ENCODE measurements at regions of chr12 and their contacts with region 1.

Region 1: GRCh38 chr12:56117778-56118687 is at the start of gene ZC3H10:
- DNase-seq: peak; percentile 99
- ATAC-seq: peak; percentile 77
- H3K4me3 Mint-ChIP-seq: peak within 1 kb of the TSS; percentile 97
- H3K27ac Mint-ChIP-seq: peak within 1 kb of the TSS; percentile 100
- H3K4me1 Mint-ChIP-seq: peaks cover 24% of the 10 kb centered on the region
- H3K27me3 Mint-ChIP-seq: no peaks in the 10 kb centered on the region
- total RNA-seq, gene ZC3H10: 6.4 to 6.5 TPM

Region 2: GRCh38 chr12:55829967-55830600 is 287.9 kb before region 1 on chr12:
- CTCF ChIA-PET with region 1: no interaction called
- POLR2A ChIA-PET with region 1: no interaction called
- intact Hi-C with region 1: loop called in 1 of 2 experiments (anchors 1 kb)
- DNase-seq: peak; percentile 52
- ATAC-seq: peak; percentile 37
- H3K4me3 Mint-ChIP-seq: peak overlapping the region; percentile 99
- H3K27ac Mint-ChIP-seq: peak overlapping the region; percentile 97
- H3K4me1 Mint-ChIP-seq: peaks cover 46% of the 10 kb centered on the region
- H3K27me3 Mint-ChIP-seq: no peaks in the 10 kb centered on the region

Region 3: DNA sequence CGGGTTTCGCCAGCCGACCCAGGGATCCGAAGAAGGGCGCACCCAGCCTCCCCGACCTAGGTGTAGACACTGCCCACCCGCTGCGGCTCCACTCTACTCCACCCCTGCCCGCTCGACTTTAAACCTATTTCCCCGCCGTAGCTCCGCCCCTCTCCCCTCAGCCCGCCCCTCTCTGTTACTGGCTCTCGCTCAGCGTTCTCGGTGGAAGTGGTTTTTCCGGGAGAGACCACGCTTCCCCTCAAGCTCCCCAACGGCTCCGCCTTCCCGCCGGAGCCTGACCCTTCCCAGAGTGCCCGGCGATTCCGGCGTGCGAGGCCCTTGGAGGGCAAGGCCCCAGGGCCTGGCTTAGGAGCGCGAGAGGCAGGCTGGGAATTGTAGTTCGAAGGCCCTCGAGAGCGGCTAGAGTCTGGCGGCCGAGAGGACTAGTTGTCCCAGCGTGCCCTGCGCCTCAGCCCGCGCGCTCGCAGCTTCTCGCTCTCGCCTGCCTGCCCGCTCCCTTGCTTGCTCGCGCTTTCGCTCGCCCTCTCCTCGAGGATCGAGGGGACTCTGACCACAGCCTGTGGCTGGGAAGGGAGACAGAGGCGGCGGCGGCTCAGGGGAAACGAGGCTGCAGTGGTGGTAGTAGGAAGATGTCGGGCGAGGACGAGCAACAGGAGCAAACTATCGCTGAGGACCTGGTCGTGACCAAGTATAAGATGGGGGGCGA is 13.8 kb before region 1 on chr12 and contains the start of gene PA2G4:
- CTCF ChIA-PET with region 1: interaction called, 47 read pairs
- POLR2A ChIA-PET with region 1: interaction called, 76 read pairs
- intact Hi-C with region 1: loop called (anchors 1 kb)
- DNase-seq: peak; percentile 99
- ATAC-seq: peak; percentile 95
- H3K4me3 Mint-ChIP-seq: peak within 1 kb of the TSS; percentile 100
- H3K27ac Mint-ChIP-seq: peak within 1 kb of the TSS; percentile 100
- H3K4me1 Mint-ChIP-seq: peaks cover 43% of the 10 kb centered on the region
- H3K27me3 Mint-ChIP-seq: no peaks in the 10 kb centered on the region
- total RNA-seq, gene PA2G4: 446 to 695 TPM

Region 4: DNA sequence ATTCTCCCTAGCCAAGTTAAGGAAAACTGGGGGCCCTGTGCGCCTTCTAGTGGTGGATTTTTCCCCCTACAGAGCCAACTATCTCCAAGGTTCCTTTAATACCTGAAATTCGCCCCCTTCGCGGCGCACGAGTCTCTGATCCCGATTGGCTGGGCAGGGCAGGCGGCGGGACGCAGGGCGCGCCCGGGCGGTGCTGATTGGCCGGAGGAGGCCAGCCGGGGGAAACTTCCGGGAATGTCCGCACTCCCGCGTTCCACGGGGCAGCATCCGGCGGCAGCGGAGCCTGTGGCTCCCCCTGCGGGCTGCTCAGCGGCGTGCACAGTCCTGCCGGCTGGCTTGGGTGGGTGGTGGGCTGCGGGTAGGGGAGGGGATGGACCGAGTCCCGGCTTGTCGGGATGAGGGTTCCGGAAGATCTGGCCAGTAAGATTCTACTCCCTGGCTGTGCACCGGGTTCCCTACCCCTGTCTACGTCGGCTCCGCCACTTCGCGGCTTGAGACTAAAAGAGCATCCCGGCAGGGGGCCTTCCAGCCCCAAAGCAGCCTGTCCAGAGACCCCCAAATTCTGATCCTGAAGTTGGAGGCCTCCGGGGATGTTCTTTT is 106.2 kb after region 1 on chr12 and contains the start of gene NABP2:
- CTCF ChIA-PET with region 1: interaction called, 41 read pairs
- POLR2A ChIA-PET with region 1: interaction called, 14 read pairs
- intact Hi-C with region 1: loop called (anchors 1 kb)
- DNase-seq: peak; percentile 98
- ATAC-seq: peak; percentile 83
- H3K4me3 Mint-ChIP-seq: peak within 1 kb of the TSS; percentile 98
- H3K27ac Mint-ChIP-seq: peak within 1 kb of the TSS; percentile 88
- H3K4me1 Mint-ChIP-seq: peaks cover 37% of the 10 kb centered on the region
- H3K27me3 Mint-ChIP-seq: no peaks in the 10 kb centered on the region
- total RNA-seq, gene NABP2: 69.1 to 76.0 TPM

Region 5: GRCh38 chr12:56333679-56334489 is 215.9 kb after region 1 on chr12 and contains the start of gene PAN2:
- CTCF ChIA-PET with region 1: interaction called, 4 read pairs
- POLR2A ChIA-PET with region 1: no interaction called
- intact Hi-C with region 1: loop called in 1 of 2 experiments (anchors 1 kb)
- DNase-seq: peak; percentile 96
- ATAC-seq: peak; percentile 88
- H3K4me3 Mint-ChIP-seq: peak within 1 kb of the TSS; percentile 83
- H3K27ac Mint-ChIP-seq: peak within 1 kb of the TSS; percentile 99
- H3K4me1 Mint-ChIP-seq: peaks cover 37% of the 10 kb centered on the region
- H3K27me3 Mint-ChIP-seq: no peaks in the 10 kb centered on the region
- total RNA-seq, gene PAN2: 54.6 to 62.5 TPM

Region 6: DNA sequence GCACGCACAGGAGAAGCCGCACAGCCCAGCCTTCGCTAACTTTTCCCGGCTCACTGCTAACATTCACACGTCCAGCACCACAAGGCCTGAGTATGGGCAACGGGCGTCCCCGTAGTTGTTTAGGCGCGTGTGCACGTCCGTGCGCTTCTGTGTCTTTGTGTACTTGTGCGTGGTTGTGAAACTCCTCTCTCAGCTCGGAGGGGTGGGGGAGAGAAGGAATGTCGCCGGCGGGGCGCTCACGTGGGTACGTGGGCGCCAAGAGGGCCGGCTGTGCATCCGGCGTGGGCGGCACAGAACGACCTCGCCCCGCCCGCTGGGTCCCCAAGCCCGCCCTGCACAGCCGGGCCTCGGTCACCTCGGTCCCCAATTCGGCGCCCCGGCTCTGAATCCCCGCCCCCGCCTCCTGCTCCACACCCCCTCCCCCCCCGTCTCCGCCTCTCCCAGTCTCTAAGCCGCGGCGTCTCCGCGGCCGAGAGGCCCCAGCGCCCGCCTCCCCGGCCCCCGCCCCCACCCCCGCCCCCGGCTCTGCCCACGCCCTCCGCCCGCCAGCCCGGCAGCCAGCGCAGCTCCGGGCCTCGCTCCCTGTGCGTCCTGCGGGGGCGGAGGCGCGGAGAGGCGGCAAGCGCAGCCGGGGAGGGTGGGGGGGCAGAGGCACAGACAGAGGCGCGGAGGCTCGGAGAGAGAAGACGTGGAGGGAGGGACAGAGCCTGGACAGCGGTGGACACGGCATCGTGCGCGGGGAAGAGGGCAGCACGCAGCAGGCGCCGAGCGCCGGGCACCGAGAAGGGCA is 970.6 kb after region 1 on chr12 and contains the start of gene NAB2:
- CTCF ChIA-PET with region 1: no interaction called
- POLR2A ChIA-PET with region 1: no interaction called
- intact Hi-C with region 1: loop called (anchors 5 to 10 kb)
- DNase-seq: peak; percentile 95
- ATAC-seq: peak; percentile 49
- H3K4me3 Mint-ChIP-seq: peak within 1 kb of the TSS; percentile 93
- H3K27ac Mint-ChIP-seq: peak within 1 kb of the TSS; percentile 95
- H3K4me1 Mint-ChIP-seq: peaks cover 63% of the 10 kb centered on the region
- H3K27me3 Mint-ChIP-seq: no peaks in the 10 kb centered on the region
- total RNA-seq, gene NAB2: 46.8 to 48.6 TPM

Measured in activated CD4-positive, alpha-beta T cell treated with anti-CD3 and anti-CD28 coated beads for 36 hours (primary cell).